ENCODE measurements at regions of chr12 and their contacts with region 1.

Region 1: GRCh38 chr12:125203145-125203765 is 138.0 kb downstream of the AACS start:
- DNase-seq: peak; percentile 35
- H3K4me3 Mint-ChIP-seq: no peak overlapping the region
- H3K27ac Mint-ChIP-seq: no peak overlapping the region
- H3K4me1 Mint-ChIP-seq: no peaks in the 10 kb centered on the region
- H3K27me3 Mint-ChIP-seq: peaks cover 87% of the 10 kb centered on the region
- CTCF ChIP-seq: peak; percentile 72

Region 2: GRCh38 chr12:124636138-124636978 is 566.9 kb before region 1 on chr12:
- CTCF ChIA-PET with region 1: no interaction called
- intact Hi-C with region 1: no loop called
- DNase-seq: peak; percentile 65
- H3K4me3 Mint-ChIP-seq: no peak overlapping the region
- H3K27ac Mint-ChIP-seq: peak overlapping the region; percentile 21
- H3K4me1 Mint-ChIP-seq: peaks cover 54% of the 10 kb centered on the region
- H3K27me3 Mint-ChIP-seq: no peaks in the 10 kb centered on the region
- CTCF ChIP-seq: no peak

Region 3: GRCh38 chr12:124727264-124727721 is 476.0 kb before region 1 on chr12:
- CTCF ChIA-PET with region 1: no interaction called
- intact Hi-C with region 1: no loop called
- DNase-seq: peak; percentile 98
- H3K4me3 Mint-ChIP-seq: no peak overlapping the region
- H3K27ac Mint-ChIP-seq: peak overlapping the region; percentile 60
- H3K4me1 Mint-ChIP-seq: peaks cover 50% of the 10 kb centered on the region
- H3K27me3 Mint-ChIP-seq: no peaks in the 10 kb centered on the region
- CTCF ChIP-seq: no peak

Region 4: GRCh38 chr12:124992874-124993625 is 210.2 kb before region 1 on chr12:
- CTCF ChIA-PET with region 1: no interaction called
- intact Hi-C with region 1: loop called (anchors 5 kb)
- DNase-seq: peak; percentile 92
- H3K4me3 Mint-ChIP-seq: peak overlapping the region; percentile 99
- H3K27ac Mint-ChIP-seq: peak overlapping the region; percentile 51
- H3K4me1 Mint-ChIP-seq: peaks cover 28% of the 10 kb centered on the region
- H3K27me3 Mint-ChIP-seq: no peaks in the 10 kb centered on the region
- CTCF ChIP-seq: peak; percentile 68

Region 5: GRCh38 chr12:125092872-125093680 is 110.2 kb before region 1 on chr12:
- CTCF ChIA-PET with region 1: interaction called, 5 read pairs
- intact Hi-C with region 1: loop called (anchors 5 kb)
- DNase-seq: peak; percentile 83
- H3K4me3 Mint-ChIP-seq: peak overlapping the region; percentile 36
- H3K27ac Mint-ChIP-seq: peak overlapping the region; percentile 34
- H3K4me1 Mint-ChIP-seq: peaks cover 41% of the 10 kb centered on the region
- H3K27me3 Mint-ChIP-seq: no peaks in the 10 kb centered on the region
- CTCF ChIP-seq: peak; percentile 42

Region 6: GRCh38 chr12:125183187-125184067 is 19.8 kb before region 1 on chr12:
- CTCF ChIA-PET with region 1: interaction called, 13 read pairs
- intact Hi-C with region 1: no loop called
- DNase-seq: peak; percentile 92
- H3K4me3 Mint-ChIP-seq: peak overlapping the region; percentile 25
- H3K27ac Mint-ChIP-seq: no peak overlapping the region
- H3K4me1 Mint-ChIP-seq: peaks cover 18% of the 10 kb centered on the region
- H3K27me3 Mint-ChIP-seq: peaks cover 55% of the 10 kb centered on the region
- CTCF ChIP-seq: peak; percentile 99

Region 7: DNA sequence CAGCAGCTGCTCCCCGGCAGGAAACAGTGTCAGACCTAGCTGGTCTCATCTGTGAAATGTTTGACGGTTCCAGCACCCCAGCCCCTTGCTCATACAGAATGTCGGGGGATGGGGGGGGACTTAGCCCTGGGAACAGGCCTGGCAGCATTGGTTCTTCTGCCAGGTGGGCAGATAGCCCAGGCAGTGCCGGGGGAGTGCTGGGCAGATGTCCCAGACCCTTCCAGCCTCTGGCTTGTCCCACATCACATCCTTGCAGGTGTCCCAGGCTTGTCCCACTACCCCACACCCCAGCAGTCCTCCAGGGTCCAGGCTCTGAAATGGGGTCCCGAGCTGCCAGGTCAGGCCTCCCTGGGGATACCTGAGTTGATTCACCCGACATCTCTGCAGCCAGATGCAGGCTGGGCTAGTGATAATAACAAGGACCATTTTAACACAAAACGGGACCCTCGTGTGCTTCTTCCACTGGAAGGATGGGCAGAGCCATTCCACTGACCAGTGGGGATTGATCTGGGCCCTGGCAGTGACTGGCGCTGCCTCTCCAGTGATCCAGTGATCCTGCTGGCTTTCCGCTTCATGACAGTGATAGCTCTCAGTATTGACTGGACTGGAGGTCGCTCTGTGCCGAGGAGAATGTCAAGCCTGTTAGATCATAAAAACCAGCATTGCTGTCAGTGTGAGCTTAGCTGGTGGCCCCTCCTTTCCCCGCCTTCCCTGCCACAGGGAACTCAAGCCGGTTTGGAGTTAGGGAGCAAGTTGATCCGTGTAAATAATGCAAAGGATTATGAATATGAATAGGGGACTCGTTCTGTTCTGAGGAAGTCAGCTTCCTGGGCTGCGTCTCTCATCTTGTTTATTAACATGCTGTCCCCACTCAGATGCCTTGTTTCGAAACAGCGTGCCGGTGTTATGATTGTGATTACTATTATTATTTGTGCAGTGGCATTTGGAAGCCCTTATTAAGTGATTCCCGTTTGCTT is 42.6 kb after region 1 on chr12:
- CTCF ChIA-PET with region 1: no interaction called
- intact Hi-C with region 1: loop called (anchors 1 kb)
- DNase-seq: no peak
- H3K4me3 Mint-ChIP-seq: no peak overlapping the region
- H3K27ac Mint-ChIP-seq: no peak overlapping the region
- H3K4me1 Mint-ChIP-seq: no peaks in the 10 kb centered on the region
- H3K27me3 Mint-ChIP-seq: peaks cover 97% of the 10 kb centered on the region
- CTCF ChIP-seq: no peak

Measured in Calu3 (cell line).